PC-3 (cell line): ENCODE measurements at regions of chr7 and their contacts with region 1.

Region 1: DNA sequence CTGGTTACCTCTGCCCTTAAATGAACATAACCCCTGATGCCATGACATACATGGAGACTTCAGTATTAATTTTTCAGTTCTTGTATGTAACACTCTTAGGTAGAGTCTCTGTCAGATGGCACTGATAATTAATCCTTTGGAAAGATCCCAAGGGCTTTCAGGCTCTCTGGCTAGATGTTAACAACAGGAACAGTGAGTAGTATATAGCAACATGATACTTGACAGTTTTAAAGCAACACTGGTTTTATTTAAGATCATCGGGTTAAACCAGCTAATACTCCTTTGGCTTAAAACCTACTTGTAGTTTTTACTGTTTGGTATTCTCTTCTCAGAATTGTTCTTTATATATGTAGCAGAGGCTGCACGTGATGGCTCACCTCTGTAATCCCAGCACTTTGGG is 27.3 kb downstream of the AHCYL2 start:
- DNase-seq: no peak
- ATAC-seq: no peak
- H3K4me3 ChIP-seq: no peak overlapping the region
- H3K27ac ChIP-seq: no peak overlapping the region
- H3K4me1 ChIP-seq: no peaks in the 10 kb centered on the region
- H3K27me3 ChIP-seq: no peaks in the 10 kb centered on the region
- CTCF ChIP-seq: no peak

Region 2: GRCh38 chr7:129262324-129262723 is 10.2 kb after region 1 on chr7:
- CTCF ChIA-PET with region 1: no interaction called
- POLR2A ChIA-PET with region 1: no interaction called
- intact Hi-C with region 1: loop called (anchors 2 kb)
- DNase-seq: no peak
- ATAC-seq: no peak
- H3K4me3 ChIP-seq: no peak overlapping the region
- H3K27ac ChIP-seq: no peak overlapping the region
- H3K4me1 ChIP-seq: peaks cover 7% of the 10 kb centered on the region; the same call in 1 of the 2 replicates
- H3K27me3 ChIP-seq: no peaks in the 10 kb centered on the region
- CTCF ChIP-seq: no peak